Activated B cell treated with CpG ODN at 0.5 μM for 24 hours (primary cell): ENCODE measurements at regions of chr3 and their contacts with region 1.

Region 1: DNA sequence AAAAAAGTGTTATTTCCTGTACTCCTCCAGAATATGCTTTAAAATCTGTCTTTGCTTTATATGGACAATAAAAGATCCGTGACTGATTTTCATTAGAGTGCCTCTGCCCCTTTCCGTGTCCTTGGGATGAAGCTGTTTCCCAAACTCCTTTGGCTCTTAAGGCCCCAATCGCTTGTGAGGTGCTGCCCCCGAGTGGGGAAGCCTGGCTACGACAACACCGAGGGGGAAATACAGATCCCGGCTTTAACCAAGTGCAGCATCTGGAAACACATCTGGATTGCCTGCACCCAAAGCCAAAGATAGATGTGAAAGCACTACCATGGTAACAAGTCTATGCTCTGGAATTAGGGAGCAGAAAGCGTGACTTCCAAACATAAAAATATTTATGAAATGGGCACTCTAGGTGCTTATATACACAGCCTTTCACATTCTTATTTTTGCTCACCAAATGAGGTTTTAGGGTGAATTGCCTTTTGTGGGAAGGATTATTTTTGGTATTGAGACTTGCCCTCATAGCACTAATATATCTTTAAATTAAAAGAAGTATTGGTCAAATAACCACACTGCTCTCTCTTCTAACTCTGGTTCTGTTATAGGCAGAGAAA is 40.6 kb upstream of the ADCY5 start:
- DNase-seq: no peak
- ATAC-seq: no peak
- H3K4me3 Mint-ChIP-seq: no peak overlapping the region
- H3K27ac Mint-ChIP-seq: no peak overlapping the region
- H3K4me1 Mint-ChIP-seq: no peaks in the 10 kb centered on the region
- H3K27me3 Mint-ChIP-seq: peaks cover 5% of the 10 kb centered on the region
- CTCF ChIP-seq: no peak

Region 2: GRCh38 chr3:123161167-123161566 is 328.3 kb before region 1 on chr3:
- CTCF ChIA-PET with region 1: no interaction called
- POLR2A ChIA-PET with region 1: no interaction called
- intact Hi-C with region 1: no loop called
- DNase-seq: no peak
- ATAC-seq: no peak
- H3K4me3 Mint-ChIP-seq: no peak overlapping the region
- H3K27ac Mint-ChIP-seq: no peak overlapping the region
- H3K4me1 Mint-ChIP-seq: no peaks in the 10 kb centered on the region
- H3K27me3 Mint-ChIP-seq: no peaks in the 10 kb centered on the region
- CTCF ChIP-seq: no peak

Region 3: DNA sequence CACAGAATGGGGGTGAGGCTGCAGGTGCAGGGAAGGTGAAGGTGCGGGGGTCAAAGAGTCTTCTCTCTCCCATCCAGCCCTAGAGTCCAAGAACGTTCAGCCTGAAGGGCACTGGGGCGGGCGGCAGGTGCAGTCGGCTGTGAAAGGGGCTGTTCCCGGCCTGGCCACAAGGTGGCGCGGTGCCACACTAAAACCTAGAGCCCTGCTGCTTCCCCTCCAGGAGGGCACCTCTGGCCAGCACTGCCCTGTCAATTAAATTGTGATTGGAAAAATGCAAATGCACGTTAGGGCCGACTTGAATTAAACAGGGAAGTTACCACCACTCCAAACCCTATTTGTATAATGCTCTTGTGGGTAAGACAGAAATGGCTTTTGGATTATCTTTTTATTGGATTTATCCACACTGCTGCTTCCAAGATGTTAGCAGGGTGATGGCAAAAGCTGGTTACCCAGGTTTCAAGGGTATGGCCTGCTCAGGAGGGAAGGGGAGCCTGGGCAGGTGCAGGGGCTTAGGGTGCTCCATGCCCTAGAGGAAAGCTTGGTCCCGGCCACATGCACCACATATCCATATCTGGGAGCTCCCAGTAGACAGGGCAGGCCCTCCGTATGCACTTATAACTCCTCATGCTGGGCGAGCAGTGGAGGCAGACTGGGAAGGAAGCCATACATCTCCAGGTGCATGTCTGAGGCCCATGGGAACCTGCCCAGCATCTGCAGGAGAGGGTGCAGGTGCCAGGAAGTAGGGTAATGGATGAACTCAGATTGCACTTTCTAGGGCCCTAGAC is 160.5 kb before region 1 on chr3:
- CTCF ChIA-PET with region 1: interaction called, 3 read pairs
- POLR2A ChIA-PET with region 1: no interaction called
- intact Hi-C with region 1: loop called (anchors 1 kb)
- DNase-seq: peak; percentile 69
- ATAC-seq: peak; percentile 79
- H3K4me3 Mint-ChIP-seq: no peak overlapping the region
- H3K27ac Mint-ChIP-seq: no peak overlapping the region
- H3K4me1 Mint-ChIP-seq: no peaks in the 10 kb centered on the region
- H3K27me3 Mint-ChIP-seq: peaks cover 2% of the 10 kb centered on the region
- CTCF ChIP-seq: no peak

Region 4: DNA sequence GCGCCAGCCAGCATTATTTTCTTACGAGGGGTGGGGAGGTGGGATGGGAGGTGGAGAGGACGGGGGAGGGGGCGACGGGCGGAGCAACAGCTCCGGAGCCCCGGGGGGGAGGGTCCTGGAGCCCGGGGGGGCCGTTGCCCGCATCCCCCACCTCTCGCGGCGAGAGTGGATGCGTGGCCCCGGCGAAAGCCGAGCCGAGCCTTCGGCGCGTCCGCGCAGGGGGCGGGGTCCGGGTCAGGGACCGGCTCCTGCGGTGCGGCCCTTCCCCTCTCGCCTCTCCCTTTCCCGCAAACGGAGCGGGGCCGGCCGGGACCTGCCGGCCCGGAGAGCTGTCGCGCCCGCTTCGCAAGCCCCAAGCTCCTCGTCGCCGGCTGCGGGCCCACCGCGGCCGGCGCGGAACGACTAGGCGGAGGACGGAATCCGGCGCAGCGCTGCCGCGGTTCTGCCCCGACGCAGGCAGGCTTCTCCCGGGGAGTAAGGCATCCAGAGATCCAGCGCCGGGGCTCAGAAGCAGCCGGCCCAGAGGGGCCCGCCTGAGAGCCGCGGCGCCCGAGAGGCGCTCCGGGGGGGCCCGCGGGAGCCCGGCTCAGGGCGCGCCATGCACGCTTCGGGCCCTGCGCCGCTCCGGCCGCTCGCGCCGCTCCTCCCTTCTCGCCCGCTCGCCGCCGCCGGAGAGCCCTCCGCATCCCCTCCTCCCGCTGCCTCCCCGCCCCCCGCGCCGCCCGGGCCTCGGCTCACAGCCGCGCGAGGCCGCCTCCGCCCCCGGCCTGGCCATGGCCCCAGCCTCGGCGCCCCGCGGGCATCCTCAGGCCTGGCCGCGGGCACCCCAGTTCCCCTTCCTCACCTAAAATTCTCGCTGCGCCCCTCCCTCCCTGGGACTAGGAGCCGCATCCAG is 40.2 kb before region 1 on chr3:
- CTCF ChIA-PET with region 1: interaction called, 3 read pairs
- POLR2A ChIA-PET with region 1: no interaction called
- intact Hi-C with region 1: loop called (anchors 5 kb)
- DNase-seq: peak; percentile 21
- ATAC-seq: no peak
- H3K4me3 Mint-ChIP-seq: peak overlapping the region; percentile 44
- H3K27ac Mint-ChIP-seq: no peak overlapping the region
- H3K4me1 Mint-ChIP-seq: peaks cover 7% of the 10 kb centered on the region
- H3K27me3 Mint-ChIP-seq: peaks cover 44% of the 10 kb centered on the region
- CTCF ChIP-seq: no peak